Breast epithelium (tissue), 4 donors: ENCODE measurements at regions of chr11 and their contacts with region 1.

Region 1: GRCh38 chr11:118139578-118139977 is 13.0 kb downstream of the SCN4B start:
- DNase-seq: no peak
- H3K4me3 ChIP-seq: no peak overlapping the region
- H3K27ac ChIP-seq: no peak overlapping the region
- H3K4me1 ChIP-seq: no peaks in the 10 kb centered on the region
- H3K27me3 ChIP-seq: peaks cover 0 to 4% of the 10 kb centered on the region in 2 donors
- CTCF ChIP-seq: no peak
- POLR2A ChIP-seq: no peak

Region 2: DNA sequence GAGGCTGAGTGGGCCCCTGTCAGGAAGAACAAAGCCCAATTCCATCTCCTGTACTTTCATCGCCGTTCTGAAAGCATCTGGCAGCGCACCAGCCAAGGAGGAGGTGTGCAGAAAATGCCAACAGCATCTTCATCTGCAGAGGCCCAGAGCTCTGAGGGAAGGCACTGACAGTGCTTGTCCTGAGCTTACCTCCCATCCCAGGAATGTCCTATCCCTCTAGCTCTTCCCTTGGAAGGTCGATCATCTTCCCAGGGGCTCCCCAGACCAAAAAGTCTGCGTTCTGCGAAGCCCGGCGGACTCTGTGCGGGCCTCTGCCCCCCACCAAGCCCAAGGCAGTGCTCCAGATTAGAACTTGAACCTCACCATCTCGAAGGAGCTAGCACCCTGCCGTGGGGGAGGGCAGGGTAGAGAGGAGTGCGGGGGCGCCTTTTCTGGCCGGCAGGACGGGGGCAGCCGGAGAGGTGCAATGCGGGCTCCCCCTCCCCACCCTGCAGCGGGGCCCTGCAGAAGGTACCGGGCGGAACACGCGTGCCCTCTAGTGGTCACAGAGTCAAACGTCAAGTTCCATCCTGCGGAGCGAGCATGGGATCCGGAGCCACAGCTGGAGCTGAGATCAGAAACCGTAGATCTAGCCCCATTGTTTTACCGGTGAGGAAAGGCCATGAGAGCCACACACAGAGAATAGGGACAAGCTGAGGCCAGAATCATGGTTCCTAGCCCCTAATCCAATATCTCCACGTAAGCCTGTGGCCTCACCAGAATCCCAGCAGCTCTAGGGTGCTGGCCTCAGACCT is 31.9 kb after region 1 on chr11:
- intact Hi-C with region 1: no loop called
- DNase-seq: peak in 1 of 2 donors; percentile 74
- H3K4me3 ChIP-seq: peak overlapping the region in 2 of 3 donors; percentile 27 to 34
- H3K27ac ChIP-seq: no peak overlapping the region
- H3K4me1 ChIP-seq: peaks cover 0 to 7% of the 10 kb centered on the region in 2 donors
- H3K27me3 ChIP-seq: no peaks in the 10 kb centered on the region
- CTCF ChIP-seq: peak; percentile 47 to 84 (median 81)
- POLR2A ChIP-seq: no peak

Region 3: DNA sequence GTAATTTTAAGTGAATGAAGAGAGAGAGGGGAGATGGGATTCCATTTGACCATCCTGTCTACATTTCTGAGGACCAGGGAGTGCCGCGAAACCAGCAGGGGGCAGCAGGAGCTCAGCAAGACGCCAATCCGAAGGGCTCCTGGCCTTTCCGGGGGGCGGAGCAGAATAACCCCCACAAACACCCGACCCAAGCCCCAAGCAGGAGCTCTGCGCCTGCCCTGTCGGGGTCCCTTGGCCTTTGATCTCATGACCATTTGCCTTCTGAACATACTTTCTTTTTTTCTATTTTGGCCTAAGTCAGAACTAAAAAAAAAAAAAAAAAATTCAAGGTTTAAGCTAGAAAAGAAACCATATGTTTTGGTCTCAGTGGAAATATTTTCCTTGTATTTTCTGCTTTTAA is 58.8 kb after region 1 on chr11:
- intact Hi-C with region 1: loop called (anchors 5 kb)
- DNase-seq: peak; percentile 61 to 69
- H3K4me3 ChIP-seq: peak overlapping the region in 2 of 3 donors; percentile 22 to 43
- H3K27ac ChIP-seq: no peak overlapping the region
- H3K4me1 ChIP-seq: no peaks in the 10 kb centered on the region
- H3K27me3 ChIP-seq: no peaks in the 10 kb centered on the region
- CTCF ChIP-seq: peak; percentile 66 to 84 (median 78)
- POLR2A ChIP-seq: no peak